CD8-positive, alpha-beta T cell (primary cell): ENCODE measurements at regions of chr16 and their contacts with region 1.

Region 1: DNA sequence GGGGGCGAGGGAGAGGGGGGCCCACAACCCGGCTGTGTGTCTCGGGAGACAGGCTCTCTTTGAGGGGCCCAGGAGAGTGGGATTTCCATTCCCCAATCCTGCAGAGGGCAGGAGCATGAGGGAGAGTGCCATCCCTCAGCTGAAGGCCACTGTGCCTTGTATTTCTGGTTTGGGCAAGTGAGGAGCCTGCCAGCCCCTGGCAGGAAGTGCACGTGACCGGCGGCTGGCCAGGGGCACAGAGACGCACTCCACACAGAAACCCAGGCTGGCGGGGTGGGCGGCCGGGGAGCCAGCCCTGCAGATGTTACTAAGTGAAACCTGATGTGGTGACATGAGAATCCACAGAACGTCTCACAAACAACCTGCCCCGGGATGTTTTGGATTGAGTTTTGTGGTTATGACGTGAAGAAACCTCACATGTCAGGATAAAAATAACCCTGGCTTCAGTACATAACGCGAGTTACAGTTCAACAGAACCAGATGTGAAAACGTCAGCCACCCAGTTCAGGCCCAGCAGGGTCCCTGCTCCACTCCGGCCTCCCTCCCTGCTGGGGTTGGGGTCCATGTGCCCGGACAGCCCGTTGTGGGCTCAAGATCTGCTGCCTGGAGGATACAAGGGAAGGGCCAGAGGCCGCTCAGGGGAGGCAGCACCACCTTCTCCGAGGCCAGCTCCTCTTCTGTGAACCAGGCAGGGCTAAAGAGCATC is 51.7 kb upstream of the MTSS2 start:
- DNase-seq: peak; percentile 56 to 93 (median 78)
- ATAC-seq: peak; percentile 82
- H3K4me3 ChIP-seq: peak overlapping the region; percentile 33 to 34
- H3K4me3 Mint-ChIP-seq: peak overlapping the region; percentile 77
- H3K27ac ChIP-seq: peak overlapping the region; percentile 89 to 92
- H3K27ac Mint-ChIP-seq: peak overlapping the region; percentile 100
- H3K4me1 ChIP-seq: peaks cover 67% of the 10 kb centered on the region
- H3K4me1 Mint-ChIP-seq: peaks cover 65% of the 10 kb centered on the region
- H3K27me3 ChIP-seq: no peaks in the 10 kb centered on the region
- H3K27me3 Mint-ChIP-seq: no peaks in the 10 kb centered on the region
- CTCF ChIP-seq: no peak

Region 2: GRCh38 chr16:70561623-70562022 is 175.9 kb before region 1 on chr16:
- CTCF ChIA-PET with region 1: no interaction called
- POLR2A ChIA-PET with region 1: no interaction called
- intact Hi-C with region 1: no loop called
- DNase-seq: no peak
- ATAC-seq: no peak
- H3K4me3 ChIP-seq: no peak overlapping the region
- H3K4me3 Mint-ChIP-seq: no peak overlapping the region
- H3K27ac ChIP-seq: no peak overlapping the region
- H3K27ac Mint-ChIP-seq: no peak overlapping the region
- H3K4me1 ChIP-seq: no peaks in the 10 kb centered on the region
- H3K4me1 Mint-ChIP-seq: no peaks in the 10 kb centered on the region
- H3K27me3 ChIP-seq: no peaks in the 10 kb centered on the region
- H3K27me3 Mint-ChIP-seq: no peaks in the 10 kb centered on the region
- CTCF ChIP-seq: no peak

Region 3: DNA sequence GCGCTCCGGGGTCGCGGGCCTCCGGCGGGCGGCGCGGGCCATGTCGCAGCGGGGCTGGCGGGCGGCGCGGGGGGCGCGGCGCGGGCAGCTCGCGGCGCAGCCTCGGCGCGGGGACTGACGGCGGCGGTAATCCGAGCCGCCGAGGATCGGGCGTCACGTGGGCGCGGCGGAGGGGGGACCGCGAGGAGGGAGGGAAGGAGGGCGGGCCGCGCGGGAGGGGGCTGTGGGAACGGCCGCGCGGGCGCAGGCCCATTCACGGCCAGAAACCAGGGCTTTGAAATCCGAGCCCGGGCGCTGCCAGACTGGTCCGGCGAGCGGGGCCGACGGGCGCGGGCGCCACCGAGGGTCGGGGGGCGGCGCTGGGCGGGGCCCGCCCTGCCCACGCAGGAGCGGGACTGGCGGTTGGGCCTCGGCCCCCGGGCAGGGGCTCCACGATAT is 51.6 kb before region 1 on chr16 and contains the start of gene MTSS2:
- CTCF ChIA-PET with region 1: interaction called, 5 read pairs
- POLR2A ChIA-PET with region 1: interaction called, 21 read pairs
- intact Hi-C with region 1: loop called in 1 of 2 experiments (anchors 1 kb)
- DNase-seq: peak in 8 of 9 experiments; percentile 10 to 68 (median 50)
- ATAC-seq: peak; percentile 72
- H3K4me3 ChIP-seq: peak within 1 kb of the TSS; percentile 32 to 48
- H3K4me3 Mint-ChIP-seq: peak within 1 kb of the TSS; percentile 76
- H3K27ac ChIP-seq: no peak within 1 kb of the TSS
- H3K27ac Mint-ChIP-seq: no peak within 1 kb of the TSS
- H3K4me1 ChIP-seq: peaks cover 20% of the 10 kb centered on the region
- H3K4me1 Mint-ChIP-seq: peaks cover 7% of the 10 kb centered on the region
- H3K27me3 ChIP-seq: peaks cover 0 to 3% of the 10 kb centered on the region in 2 experiments
- H3K27me3 Mint-ChIP-seq: no peaks in the 10 kb centered on the region
- CTCF ChIP-seq: no peak
- total RNA-seq, gene MTSS2: 27.9 to 28.4 TPM

Region 4: DNA sequence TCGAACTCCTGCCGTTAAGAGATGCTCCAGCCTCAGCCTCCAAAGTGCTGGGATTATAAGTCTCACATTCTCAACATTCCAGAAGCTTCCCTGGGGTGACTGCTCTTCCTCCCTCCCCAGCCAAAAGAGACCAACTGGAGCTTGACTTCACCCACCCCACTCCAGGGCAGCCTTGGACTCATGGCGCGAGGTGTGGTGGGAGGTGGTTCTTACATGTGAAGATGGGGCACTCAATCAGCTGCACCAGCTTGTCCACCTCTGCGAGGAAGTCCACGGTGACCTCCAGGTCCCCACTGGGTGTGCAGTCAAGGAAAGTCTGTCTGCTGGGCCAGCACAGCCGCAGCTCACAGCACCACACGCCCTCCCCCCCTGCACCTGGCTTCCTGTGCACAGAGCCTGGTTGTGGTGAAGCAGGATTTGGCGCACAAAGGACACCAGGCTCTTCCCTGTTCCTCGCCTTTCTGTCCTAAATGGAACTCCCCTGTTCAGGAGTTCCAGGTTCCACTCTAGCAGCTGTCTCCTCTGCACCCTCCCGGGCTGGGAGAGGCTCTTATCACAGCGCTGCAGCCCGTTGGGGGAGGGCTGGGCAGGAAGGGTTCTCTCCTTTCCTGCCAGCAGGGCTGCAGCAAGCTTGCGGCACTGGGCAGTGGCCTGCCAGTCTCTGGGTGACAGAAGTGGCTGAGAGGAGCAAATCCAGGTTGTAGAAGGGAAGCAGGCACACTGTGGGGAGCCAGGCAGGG is 42.0 kb before region 1 on chr16:
- CTCF ChIA-PET with region 1: interaction called, 3 read pairs
- POLR2A ChIA-PET with region 1: interaction called, 22 read pairs
- intact Hi-C with region 1: loop called in 1 of 2 experiments (anchors 5 kb)
- DNase-seq: peak in 7 of 9 experiments; percentile 1 to 72 (median 29)
- ATAC-seq: peak; percentile 10
- H3K4me3 ChIP-seq: no peak overlapping the region
- H3K4me3 Mint-ChIP-seq: peak overlapping the region; percentile 44
- H3K27ac ChIP-seq: no peak overlapping the region
- H3K27ac Mint-ChIP-seq: peak overlapping the region; percentile 91
- H3K4me1 ChIP-seq: peaks cover 38% of the 10 kb centered on the region
- H3K4me1 Mint-ChIP-seq: peaks cover 31% of the 10 kb centered on the region
- H3K27me3 ChIP-seq: no peaks in the 10 kb centered on the region
- H3K27me3 Mint-ChIP-seq: no peaks in the 10 kb centered on the region
- CTCF ChIP-seq: no peak